ENCODE measurements at regions of chrX and their contacts with region 1.

Region 1: DNA sequence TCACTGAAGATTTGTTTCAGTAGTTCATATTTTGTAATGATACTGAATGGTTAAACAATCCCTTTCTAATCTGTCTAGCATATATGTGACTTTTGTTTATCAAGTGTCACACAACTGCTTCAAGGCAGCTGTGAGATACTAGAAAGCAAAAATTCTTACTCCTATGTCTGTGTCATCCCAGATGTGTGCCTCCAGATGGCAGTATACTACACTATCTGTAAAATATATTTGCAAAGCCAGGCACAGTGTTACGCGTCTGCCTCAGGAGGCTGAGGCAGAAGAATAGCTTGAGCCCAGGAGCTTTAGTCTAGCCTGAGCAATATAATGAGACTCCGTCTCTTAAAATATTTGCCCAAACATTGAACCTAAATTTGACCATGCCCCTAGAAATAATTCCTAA is 4.0 kb downstream of the NUDT10 start:
- DNase-seq: no peak
- H3K4me3 ChIP-seq: no peak overlapping the region
- H3K27ac ChIP-seq: no peak overlapping the region
- H3K4me1 ChIP-seq: no peaks in the 10 kb centered on the region
- H3K27me3 ChIP-seq: no peaks in the 10 kb centered on the region
- CTCF ChIP-seq: peak; percentile 30 to 42

Region 2: GRCh38 chrX:50799531-50799961 is 537.0 kb before region 1 on chrX:
- intact Hi-C with region 1: no loop called
- DNase-seq: no peak
- H3K4me3 ChIP-seq: no peak overlapping the region
- H3K27ac ChIP-seq: no peak overlapping the region
- H3K4me1 ChIP-seq: no peaks in the 10 kb centered on the region
- H3K27me3 ChIP-seq: no peaks in the 10 kb centered on the region
- CTCF ChIP-seq: no peak

Region 3: DNA sequence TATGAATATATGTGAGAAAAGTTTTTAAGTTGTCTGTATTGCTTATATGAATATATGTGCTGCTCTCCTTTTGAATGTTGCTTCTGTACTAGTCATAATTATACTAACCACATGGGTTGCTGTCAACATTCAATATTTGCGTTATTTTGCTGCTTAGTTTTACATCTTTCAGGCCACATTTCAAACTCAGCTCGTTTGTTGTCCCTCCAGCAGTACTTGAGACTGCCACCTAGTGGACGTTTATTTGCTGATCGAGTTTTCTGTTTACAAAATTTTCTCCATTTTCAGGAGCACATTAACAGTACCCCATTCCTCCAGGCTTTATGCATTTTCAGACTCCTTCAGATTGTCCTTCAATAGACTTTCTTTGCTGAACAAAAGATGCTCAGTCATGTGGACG is 84.0 kb after region 1 on chrX:
- intact Hi-C with region 1: loop called (anchors 10 kb)
- DNase-seq: no peak
- H3K4me3 ChIP-seq: no peak overlapping the region
- H3K27ac ChIP-seq: no peak overlapping the region
- H3K4me1 ChIP-seq: no peaks in the 10 kb centered on the region
- H3K27me3 ChIP-seq: no peaks in the 10 kb centered on the region
- CTCF ChIP-seq: peak; percentile 38 to 48

Measured in tibial artery (tissue), 4 donors.